Gastrocnemius medialis (tissue), 4 donors: ENCODE measurements at regions of chr5 and their contacts with region 1.

Region 1: GRCh38 chr5:59810041-59810440 is 83.5 kb downstream of the PDE4D start:
- DNase-seq: peak; percentile 22 to 36
- ATAC-seq: peak; percentile 53 to 71
- H3K4me3 ChIP-seq: no peak overlapping the region
- H3K27ac ChIP-seq: no peak overlapping the region
- H3K4me1 ChIP-seq: no peaks in the 10 kb centered on the region
- H3K27me3 ChIP-seq: no peaks in the 10 kb centered on the region
- CTCF ChIP-seq: peak; percentile 51 to 92 (median 79)
- POLR2A ChIP-seq: no peak

Region 2: DNA sequence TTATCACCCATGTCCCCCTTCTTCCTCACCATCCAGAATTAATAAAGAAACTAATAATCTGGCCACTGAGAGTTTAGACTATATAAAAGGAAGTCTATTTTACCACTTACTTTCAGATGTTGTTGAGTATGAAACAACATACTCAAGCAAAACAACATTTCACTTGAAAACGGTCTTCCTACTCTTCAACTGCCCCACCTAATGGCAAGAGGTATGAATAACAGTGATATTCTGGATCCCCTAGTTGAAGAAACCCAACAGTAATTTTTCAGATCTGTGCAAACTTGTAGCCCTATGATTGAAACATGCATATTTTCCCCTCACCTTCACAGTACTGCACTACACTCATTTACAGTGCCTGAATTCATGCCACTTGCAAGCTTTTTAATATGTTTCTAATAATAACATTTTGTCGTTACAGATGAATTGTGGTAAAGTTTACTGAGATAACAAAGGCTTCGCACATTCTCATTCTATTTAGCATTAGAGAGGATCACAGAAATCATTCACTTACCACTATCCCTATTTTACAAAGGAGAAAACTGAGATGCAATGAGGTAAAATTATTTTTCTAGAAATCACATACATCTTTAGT is 351.4 kb after region 1 on chr5:
- in situ Hi-C with region 1: no loop called
- intact Hi-C with region 1: loop called (anchors 5 kb)
- DNase-seq: no peak
- ATAC-seq: no peak
- H3K4me3 ChIP-seq: no peak overlapping the region
- H3K27ac ChIP-seq: no peak overlapping the region
- H3K4me1 ChIP-seq: no peaks in the 10 kb centered on the region
- H3K27me3 ChIP-seq: no peaks in the 10 kb centered on the region
- CTCF ChIP-seq: no peak
- POLR2A ChIP-seq: no peak

Region 3: DNA sequence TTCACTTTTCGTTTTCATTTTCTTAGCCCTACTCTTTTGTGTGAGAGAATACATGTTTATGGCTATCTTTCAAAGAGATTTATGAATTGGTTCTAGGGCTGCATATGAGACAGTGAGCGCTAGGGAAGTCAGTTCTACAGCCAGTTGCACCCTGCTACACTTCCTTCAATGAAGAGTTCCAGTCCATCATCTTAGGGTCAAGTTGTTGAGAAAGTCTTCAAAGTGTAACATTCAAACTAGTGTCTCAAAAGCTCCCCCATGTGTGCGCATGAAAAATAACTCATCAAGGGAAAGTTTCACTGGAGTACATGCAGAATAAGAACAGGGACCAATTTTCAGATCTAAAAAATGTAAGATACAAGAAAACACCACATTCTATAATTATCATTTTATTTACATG is 572.7 kb after region 1 on chr5:
- in situ Hi-C with region 1: loop called in 1 of 4 experiments (anchors 25 kb)
- intact Hi-C with region 1: no loop called
- DNase-seq: no peak
- ATAC-seq: no peak
- H3K4me3 ChIP-seq: no peak overlapping the region
- H3K27ac ChIP-seq: no peak overlapping the region
- H3K4me1 ChIP-seq: no peaks in the 10 kb centered on the region
- H3K27me3 ChIP-seq: no peaks in the 10 kb centered on the region
- CTCF ChIP-seq: no peak
- POLR2A ChIP-seq: no peak

Region 4: DNA sequence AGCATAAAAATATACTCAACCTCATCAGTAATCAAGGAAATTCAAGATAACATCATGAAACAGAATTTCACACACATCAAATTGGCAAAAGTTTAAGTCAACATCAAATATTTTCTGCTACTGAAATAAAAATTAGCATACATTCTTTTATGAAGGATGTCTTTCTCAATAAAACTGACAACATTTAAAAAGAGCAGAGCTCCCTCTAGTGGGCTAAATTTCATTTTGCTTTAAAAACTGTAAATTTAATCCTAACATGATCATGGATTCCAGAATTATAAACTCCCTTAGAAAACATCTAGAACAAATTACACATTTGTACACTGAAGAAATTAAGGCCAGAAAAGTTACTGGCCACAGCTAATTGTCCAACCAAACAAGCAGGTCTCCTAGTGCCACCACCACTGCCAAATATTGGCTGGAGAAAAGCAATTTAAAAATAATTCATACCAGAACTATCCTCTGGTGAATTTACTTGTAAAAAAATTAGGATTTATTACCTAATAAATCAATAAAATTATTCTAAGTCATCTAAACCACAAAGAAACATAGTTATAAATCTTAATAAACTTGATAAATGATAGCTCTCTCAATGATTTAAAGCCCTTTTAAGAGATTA is 858.8 kb after region 1 on chr5:
- in situ Hi-C with region 1: loop called in 3 of 4 experiments (anchors 5 to 10 kb)
- intact Hi-C with region 1: loop called (anchors 5 kb)
- DNase-seq: no peak
- ATAC-seq: no peak
- H3K4me3 ChIP-seq: no peak overlapping the region
- H3K27ac ChIP-seq: no peak overlapping the region
- H3K4me1 ChIP-seq: no peaks in the 10 kb centered on the region
- H3K27me3 ChIP-seq: no peaks in the 10 kb centered on the region
- CTCF ChIP-seq: peak in 4 of 5 experiments; percentile 17 to 55 (median 37)
- POLR2A ChIP-seq: no peak

Region 5: GRCh38 chr5:60677844-60678664 is 868.0 kb after region 1 on chr5:
- in situ Hi-C with region 1: loop called in 3 of 4 experiments (anchors 5 to 25 kb)
- intact Hi-C with region 1: no loop called
- DNase-seq: no peak
- ATAC-seq: no peak
- H3K4me3 ChIP-seq: no peak overlapping the region
- H3K27ac ChIP-seq: no peak overlapping the region
- H3K4me1 ChIP-seq: no peaks in the 10 kb centered on the region
- H3K27me3 ChIP-seq: no peaks in the 10 kb centered on the region
- CTCF ChIP-seq: peak in 1 of 5 experiments; percentile 46
- POLR2A ChIP-seq: no peak

Region 6: GRCh38 chr5:60699530-60700382 is 889.7 kb after region 1 on chr5 and contains the start of gene DEPDC1B:
- in situ Hi-C with region 1: loop called in 1 of 4 experiments (anchors 25 kb)
- intact Hi-C with region 1: no loop called
- DNase-seq: peak; percentile 49 to 58
- ATAC-seq: peak; percentile 90
- H3K4me3 ChIP-seq: peak within 1 kb of the TSS; percentile 71 to 85 (median 80)
- H3K27ac ChIP-seq: peak within 1 kb of the TSS; percentile 44 to 63 (median 54)
- H3K4me1 ChIP-seq: peaks cover 9 to 12% of the 10 kb centered on the region in 2 donors
- H3K27me3 ChIP-seq: no peaks in the 10 kb centered on the region
- CTCF ChIP-seq: no peak
- POLR2A ChIP-seq: peak in 1 of 2 donors; percentile 7
- total RNA-seq, gene DEPDC1B: 0.42 TPM in 1 of 4 donors, not detected in the others